ENCODE measurements at regions of chr7 and their contacts with region 1.

Region 1: DNA sequence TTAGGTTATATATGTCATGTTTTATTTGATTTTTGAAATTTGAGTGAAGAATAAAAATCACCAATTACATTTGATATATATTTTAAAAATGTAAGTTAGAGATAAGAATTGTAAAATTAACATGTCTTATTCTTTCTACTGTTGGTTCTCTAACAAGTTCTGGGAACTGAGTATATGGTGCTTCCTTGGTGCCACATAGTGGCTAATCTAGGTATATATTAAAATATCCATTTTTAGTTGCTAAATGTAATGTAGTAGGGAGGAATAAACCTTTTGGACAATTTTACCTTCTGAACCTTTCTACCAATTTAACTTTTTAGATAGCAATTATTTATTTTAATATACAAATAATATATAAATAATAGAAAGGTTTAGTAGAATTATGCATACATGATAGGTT is 17.5 kb downstream of the CFAP69 start:
- DNase-seq: no peak
- ATAC-seq: peak; percentile 84

Region 2: GRCh38 chr7:89085580-89085979 is 1176.9 kb before region 1 on chr7:
- intact Hi-C with region 1: no loop called
- DNase-seq: no peak
- ATAC-seq: no peak

Region 3: DNA sequence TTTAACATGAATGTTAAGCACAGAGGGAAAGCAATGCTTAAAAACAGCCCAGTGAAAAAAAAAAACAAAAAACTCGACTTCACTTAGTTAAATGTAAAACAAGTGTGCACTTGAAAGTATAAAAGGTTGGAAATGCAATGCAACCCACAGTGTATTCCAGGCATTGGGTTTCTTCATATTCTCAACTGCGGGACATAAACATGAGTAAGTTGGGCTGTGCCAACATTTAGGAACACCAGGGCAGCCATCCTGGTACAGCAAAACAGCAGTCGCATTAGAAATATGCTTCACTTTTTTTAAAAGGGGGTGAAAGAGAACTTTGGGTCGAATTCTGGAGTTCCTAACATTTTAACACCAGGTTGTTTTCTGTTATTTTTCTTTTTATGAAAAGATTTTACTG is 107.2 kb before region 1 on chr7:
- intact Hi-C with region 1: loop called in 1 of 2 experiments (anchors 5 kb)
- DNase-seq: no peak
- ATAC-seq: no peak

Region 4: GRCh38 chr7:90403174-90404113 is 141.0 kb after region 1 on chr7 and contains the start of gene CLDN12:
- intact Hi-C with region 1: no loop called
- DNase-seq: peak; percentile 87 to 91
- ATAC-seq: peak; percentile 95
- total RNA-seq, gene CLDN12: 68.2 to 71.1 TPM